ENCODE measurements at regions of chrX and their contacts with region 1.

Region 1: DNA sequence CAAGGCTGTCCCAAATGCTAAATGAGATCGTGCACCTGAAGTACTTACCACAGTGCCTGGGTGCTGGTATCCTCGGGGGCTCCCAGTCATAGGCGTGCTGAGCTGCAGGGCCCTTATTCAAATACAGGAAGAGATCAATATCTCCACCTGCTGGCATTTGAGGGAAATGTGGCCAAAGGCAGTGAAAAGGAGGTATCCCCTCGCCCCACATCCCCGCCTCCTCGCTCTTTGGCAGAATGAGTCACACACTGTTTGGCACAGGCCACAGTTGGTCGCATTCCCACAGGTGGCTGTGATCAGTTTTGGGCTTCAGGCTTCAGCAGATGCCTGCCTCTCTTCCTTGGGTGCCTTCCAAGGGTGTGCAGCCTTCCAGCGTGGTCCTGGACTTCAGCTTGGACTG is 28.4 kb downstream of the ZNF185 start:
- DNase-seq: peak; percentile 62
- H3K4me3 ChIP-seq: no peak overlapping the region
- CTCF ChIP-seq: peak; percentile 59

Region 2: DNA sequence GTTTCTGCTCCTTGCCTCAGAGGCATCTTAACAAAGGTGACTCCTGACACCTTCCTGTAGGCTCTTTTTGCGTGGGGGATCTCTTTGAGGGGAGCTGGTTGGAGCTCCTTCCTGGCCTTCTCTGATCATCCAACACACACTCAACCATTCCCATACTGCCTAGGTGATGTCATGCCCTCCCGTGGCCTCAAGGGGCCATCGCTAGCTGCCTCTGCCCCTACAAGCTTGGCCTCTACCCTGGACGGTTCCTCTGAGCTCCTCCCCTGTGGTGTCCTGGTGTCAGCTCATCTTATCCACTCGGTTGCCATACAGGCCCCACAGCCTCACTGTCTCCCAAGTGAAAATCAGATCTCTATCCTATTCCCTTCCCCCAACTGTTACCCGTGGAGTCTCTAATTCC is 42.1 kb before region 1 on chrX:
- in situ Hi-C with region 1: loop called (anchors 5 kb)
- DNase-seq: no peak
- H3K4me3 ChIP-seq: no peak overlapping the region
- CTCF ChIP-seq: no peak

Measured in astrocyte of the cerebellum (primary cell).